Activated T-helper 1 cell treated with anti-CD3 and anti-CD28 coated beads, Interleukin-12 subunit alpha, Interleukin-12 subunit beta, Interleukin-2, Interleukin-4 antibody, amounts not matched to agents 30 ng/mL and 10 ng/mL and 1 ng/mL, durations not matched to agents 14 hours and 24 hours and 36 hours (primary cell): ENCODE measurements at regions of chr4 and their contacts with region 1.

Region 1: GRCh38 chr4:164779811-164780216 is 25.9 kb downstream of the SMIM31 start:
- DNase-seq: no peak
- H3K4me3 Mint-ChIP-seq: no peak overlapping the region
- H3K27ac Mint-ChIP-seq: no peak overlapping the region
- H3K4me1 Mint-ChIP-seq: no peaks in the 10 kb centered on the region
- H3K27me3 Mint-ChIP-seq: peaks cover 3% of the 10 kb centered on the region

Region 2: DNA sequence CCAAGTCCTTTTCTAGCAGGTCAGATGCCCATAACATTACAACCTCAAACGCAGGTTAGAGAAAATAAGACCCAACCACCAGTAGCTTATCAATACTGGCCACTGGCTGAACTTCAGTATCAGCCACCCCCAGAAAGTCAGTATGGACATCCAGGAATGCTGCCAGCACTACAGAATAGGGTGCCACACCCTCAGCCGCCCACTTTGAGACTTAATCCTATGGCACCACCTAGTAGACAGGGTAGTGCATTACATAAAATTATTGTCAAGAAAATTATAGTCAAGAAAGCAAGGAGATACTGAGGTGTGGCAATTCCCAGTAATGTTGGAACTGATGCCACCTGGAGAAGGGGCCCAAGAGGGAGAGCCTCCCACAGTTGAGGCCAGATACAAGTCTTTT is 217.5 kb after region 1 on chr4:
- intact Hi-C with region 1: loop called (anchors 2 kb)
- DNase-seq: no peak
- H3K4me3 Mint-ChIP-seq: no peak overlapping the region
- H3K27ac Mint-ChIP-seq: no peak overlapping the region
- H3K4me1 Mint-ChIP-seq: no peaks in the 10 kb centered on the region
- H3K27me3 Mint-ChIP-seq: peaks cover 17% of the 10 kb centered on the region

Region 3: GRCh38 chr4:165096776-165097175 is 317.0 kb after region 1 on chr4:
- intact Hi-C with region 1: loop called (anchors 1 kb)
- DNase-seq: no peak
- H3K4me3 Mint-ChIP-seq: no peak overlapping the region
- H3K27ac Mint-ChIP-seq: no peak overlapping the region
- H3K4me1 Mint-ChIP-seq: no peaks in the 10 kb centered on the region
- H3K27me3 Mint-ChIP-seq: no peaks in the 10 kb centered on the region